Common myeloid progenitor, CD34-positive (primary cell): ENCODE measurements at regions of chr19 and their contacts with region 1.

Region 1: DNA sequence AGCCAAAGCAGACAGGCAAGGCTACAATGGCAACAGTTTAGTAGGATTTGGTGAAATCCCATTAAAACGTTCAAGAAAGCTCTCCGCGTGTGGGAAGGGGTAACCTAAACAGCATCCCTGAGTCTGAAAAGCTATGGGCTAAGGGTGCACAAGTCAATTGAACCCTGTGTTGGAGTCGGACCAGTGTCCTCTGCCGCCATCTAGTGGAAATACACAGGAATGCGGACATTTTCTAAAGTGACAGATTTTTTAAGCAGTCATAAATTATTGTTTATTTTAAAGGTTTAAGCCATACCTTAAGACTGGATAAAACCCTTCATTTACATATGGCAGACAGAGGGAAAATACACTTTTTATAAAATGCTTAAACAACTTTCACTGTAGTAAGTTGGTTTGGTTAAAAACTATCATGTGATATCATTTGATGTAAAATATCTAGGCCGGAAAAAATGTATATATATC is 26.5 kb upstream of the LSM14A start:
- DNase-seq: peak; percentile 51 to 82 (median 73)
- H3K4me3 ChIP-seq: no peak overlapping the region
- H3K27ac ChIP-seq: no peak overlapping the region
- H3K4me1 ChIP-seq: no peaks in the 10 kb centered on the region
- H3K27me3 ChIP-seq: no peaks in the 10 kb centered on the region

Region 2: DNA sequence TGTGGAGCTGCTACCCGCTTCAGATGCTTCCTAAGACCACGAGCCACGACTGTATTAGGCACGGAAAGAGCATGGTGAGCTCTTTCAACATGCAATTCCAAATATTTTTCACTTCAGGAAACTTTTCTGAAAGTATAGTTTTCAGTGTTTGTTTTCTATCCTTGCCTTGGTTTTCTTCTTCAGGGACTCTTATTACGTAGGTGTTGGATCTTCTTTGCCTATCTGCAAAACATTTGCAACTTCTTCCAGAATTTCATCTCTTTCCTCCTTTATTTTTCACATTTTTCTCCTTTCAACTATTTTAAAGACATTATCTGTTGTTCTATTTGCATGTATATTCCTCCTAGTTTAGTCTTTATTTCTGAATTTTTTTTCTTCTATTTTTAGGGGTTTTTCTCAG is 122.4 kb before region 1 on chr19:
- CTCF ChIA-PET with region 1: no interaction called
- POLR2A ChIA-PET with region 1: no interaction called
- DNase-seq: no peak
- H3K4me3 ChIP-seq: no peak overlapping the region
- H3K27ac ChIP-seq: no peak overlapping the region
- H3K4me1 ChIP-seq: no peaks in the 10 kb centered on the region
- H3K27me3 ChIP-seq: peaks cover 0 to 11% (median 2%) of the 10 kb centered on the region in 5 experiments

Region 3: GRCh38 chr19:34120846-34121639 is 24.7 kb before region 1 on chr19:
- CTCF ChIA-PET with region 1: interaction called, 16 read pairs
- POLR2A ChIA-PET with region 1: no interaction called
- DNase-seq: peak; percentile 57 to 78 (median 73)
- H3K4me3 ChIP-seq: no peak overlapping the region
- H3K27ac ChIP-seq: no peak overlapping the region
- H3K4me1 ChIP-seq: peaks cover 0 to 7% (median 4%) of the 10 kb centered on the region in 4 experiments
- H3K27me3 ChIP-seq: no peaks in the 10 kb centered on the region

Region 4: GRCh38 chr19:34298891-34299520 is 153.2 kb after region 1 on chr19:
- CTCF ChIA-PET with region 1: no interaction called
- POLR2A ChIA-PET with region 1: no interaction called
- DNase-seq: no peak
- H3K4me3 ChIP-seq: no peak overlapping the region
- H3K27ac ChIP-seq: no peak overlapping the region
- H3K4me1 ChIP-seq: no peaks in the 10 kb centered on the region
- H3K27me3 ChIP-seq: no peaks in the 10 kb centered on the region